Naive thymus-derived CD4-positive, alpha-beta T cell (primary cell): ENCODE measurements at regions of chr3 and their contacts with region 1.

Region 1: DNA sequence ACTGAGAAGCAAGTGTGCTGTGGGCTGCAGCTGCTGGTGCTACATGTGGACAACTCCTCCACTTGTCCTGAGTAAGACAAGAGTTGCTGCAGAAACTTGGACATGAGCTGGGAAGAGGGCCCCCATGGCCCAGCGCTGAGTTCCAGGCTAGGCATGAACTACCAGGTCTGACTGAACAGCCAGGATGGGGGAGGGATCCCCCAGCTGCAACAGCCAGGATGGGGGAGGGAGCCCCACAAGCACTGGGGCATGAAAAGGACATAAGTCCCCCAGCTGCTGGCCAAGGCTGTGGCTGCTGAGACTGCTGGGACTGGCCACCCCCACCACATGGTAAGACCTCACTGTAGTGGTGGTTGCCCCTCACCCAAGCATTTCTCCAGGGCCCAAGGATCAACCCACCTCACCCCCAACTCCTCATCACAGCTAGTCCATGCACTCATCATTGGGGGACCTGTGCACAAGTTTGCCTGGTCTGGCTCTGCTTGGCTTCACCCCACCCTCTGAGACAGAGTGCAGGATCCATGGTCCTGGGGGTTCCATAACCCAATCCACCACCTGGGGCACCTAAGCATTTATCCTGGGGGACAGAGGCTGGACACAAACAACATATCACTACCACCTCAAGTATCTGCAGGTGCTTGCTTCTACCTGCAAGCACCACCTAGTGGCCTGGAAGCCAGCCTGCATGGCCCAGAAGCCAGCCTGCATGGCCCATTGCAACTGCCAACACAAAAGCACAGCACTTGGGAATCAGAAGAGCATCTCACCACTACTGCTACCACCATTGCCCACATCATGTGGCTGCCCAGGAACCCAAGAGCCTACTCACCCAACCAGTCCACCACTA is 84.5 kb upstream of the STT3B start:
- DNase-seq: peak in 3 of 9 donors; percentile 13 to 27 (median 19)
- ATAC-seq: peak; percentile 53
- H3K4me3 ChIP-seq: no peak overlapping the region
- H3K4me3 Mint-ChIP-seq: peak overlapping the region in 3 of 10 donors; percentile 0 to 31 (median 22)
- H3K27ac ChIP-seq: no peak overlapping the region
- H3K27ac Mint-ChIP-seq: peak overlapping the region in 1 of 9 donors; percentile 11
- H3K4me1 ChIP-seq: peaks cover 5 to 11% of the 10 kb centered on the region in 2 donors
- H3K4me1 Mint-ChIP-seq: peaks cover 14 to 33% (median 26%) of the 10 kb centered on the region in 7 donors
- H3K27me3 ChIP-seq: no peaks in the 10 kb centered on the region
- H3K27me3 Mint-ChIP-seq: no peaks in the 10 kb centered on the region

Region 2: DNA sequence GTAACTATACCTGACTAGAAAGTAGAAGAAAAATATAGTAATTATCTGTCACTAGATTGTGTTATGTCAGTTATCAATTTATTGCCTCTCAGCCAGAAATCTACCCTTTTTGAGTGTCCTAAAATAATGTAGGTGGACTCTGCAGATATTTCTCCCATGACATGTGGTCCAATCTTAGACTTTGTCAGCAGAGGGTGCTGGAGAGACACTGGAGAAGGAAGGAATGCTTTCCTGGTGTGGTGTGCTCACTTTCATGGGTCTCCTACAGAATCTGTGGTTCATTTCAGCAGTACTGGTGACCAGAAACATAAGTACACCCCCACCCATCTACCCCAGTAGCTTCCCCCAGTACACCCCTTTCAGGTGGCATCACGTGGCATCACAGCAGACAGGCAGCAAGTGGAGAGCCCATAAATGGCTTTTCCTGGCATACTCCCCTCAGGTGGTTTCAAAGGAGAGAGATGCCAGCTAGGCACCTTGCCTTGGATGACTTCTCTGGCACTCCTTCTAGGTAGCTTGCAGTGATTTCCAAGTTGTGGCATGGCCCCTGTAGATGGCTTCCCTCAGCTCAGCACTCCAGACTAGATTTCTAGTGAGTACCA is 668.5 kb before region 1 on chr3:
- CTCF ChIA-PET with region 1: no interaction called
- POLR2A ChIA-PET with region 1: no interaction called
- intact Hi-C with region 1: loop called in 1 of 2 experiments (anchors 10 kb)
- DNase-seq: no peak
- ATAC-seq: no peak
- H3K4me3 ChIP-seq: no peak overlapping the region
- H3K4me3 Mint-ChIP-seq: no peak overlapping the region
- H3K27ac ChIP-seq: no peak overlapping the region
- H3K27ac Mint-ChIP-seq: no peak overlapping the region
- H3K4me1 ChIP-seq: no peaks in the 10 kb centered on the region
- H3K4me1 Mint-ChIP-seq: peaks cover 0 to 3% (median 0%) of the 10 kb centered on the region in 7 donors
- H3K27me3 ChIP-seq: no peaks in the 10 kb centered on the region
- H3K27me3 Mint-ChIP-seq: peaks cover 2 to 24% (median 7%) of the 10 kb centered on the region in 5 donors

Region 3: DNA sequence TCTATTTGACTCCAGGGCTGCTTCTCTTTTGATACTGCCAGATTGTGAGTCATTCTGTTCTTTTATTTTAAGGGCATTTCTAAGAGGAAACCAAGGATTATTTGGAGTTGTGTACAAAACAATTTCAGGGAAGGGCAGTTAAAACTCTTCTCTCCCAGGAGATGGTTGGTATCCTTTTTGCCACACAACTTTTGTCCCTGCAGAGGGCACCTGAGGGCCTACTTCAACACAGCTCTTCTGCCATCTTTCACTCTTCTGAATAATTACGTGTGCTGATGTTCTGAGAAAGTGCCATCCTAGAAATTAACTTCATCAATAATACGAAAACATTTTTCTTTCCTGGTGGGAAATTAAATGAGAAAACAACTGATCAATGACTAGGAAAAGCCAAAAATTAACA is 478.1 kb before region 1 on chr3:
- CTCF ChIA-PET with region 1: no interaction called
- POLR2A ChIA-PET with region 1: no interaction called
- intact Hi-C with region 1: loop called in 1 of 2 experiments (anchors 2 kb)
- DNase-seq: peak in 4 of 9 donors; percentile 2 to 23 (median 8)
- ATAC-seq: no peak
- H3K4me3 ChIP-seq: no peak overlapping the region
- H3K4me3 Mint-ChIP-seq: no peak overlapping the region
- H3K27ac ChIP-seq: no peak overlapping the region
- H3K27ac Mint-ChIP-seq: no peak overlapping the region
- H3K4me1 ChIP-seq: no peaks in the 10 kb centered on the region
- H3K4me1 Mint-ChIP-seq: peaks cover 0 to 5% (median 0%) of the 10 kb centered on the region in 7 donors
- H3K27me3 ChIP-seq: no peaks in the 10 kb centered on the region
- H3K27me3 Mint-ChIP-seq: peaks cover 3 to 16% (median 9%) of the 10 kb centered on the region in 5 donors

Region 4: GRCh38 chr3:31472479-31473390 is 24.5 kb after region 1 on chr3:
- CTCF ChIA-PET with region 1: no interaction called
- POLR2A ChIA-PET with region 1: no interaction called
- intact Hi-C with region 1: no loop called
- DNase-seq: peak in 1 of 9 donors; percentile 29
- ATAC-seq: peak; percentile 38
- H3K4me3 ChIP-seq: no peak overlapping the region
- H3K4me3 Mint-ChIP-seq: no peak overlapping the region
- H3K27ac ChIP-seq: no peak overlapping the region
- H3K27ac Mint-ChIP-seq: no peak overlapping the region
- H3K4me1 ChIP-seq: peaks cover 0 to 5% of the 10 kb centered on the region in 2 donors
- H3K4me1 Mint-ChIP-seq: peaks cover 8 to 30% (median 21%) of the 10 kb centered on the region in 7 donors
- H3K27me3 ChIP-seq: no peaks in the 10 kb centered on the region
- H3K27me3 Mint-ChIP-seq: peaks cover 0 to 12% (median 0%) of the 10 kb centered on the region in 5 donors